Ascending aorta (tissue), 2 donors: ENCODE measurements at regions of chr6 and their contacts with region 1.

Region 1: GRCh38 chr6:148416330-148416965 is 73.8 kb downstream of the SASH1 start:
- DNase-seq: no peak
- H3K4me3 ChIP-seq: no peak overlapping the region
- H3K27ac ChIP-seq: no peak overlapping the region
- H3K4me1 ChIP-seq: peaks cover 5 to 24% of the 10 kb centered on the region in 2 donors
- H3K27me3 ChIP-seq: no peaks in the 10 kb centered on the region
- CTCF ChIP-seq: no peak

Region 2: DNA sequence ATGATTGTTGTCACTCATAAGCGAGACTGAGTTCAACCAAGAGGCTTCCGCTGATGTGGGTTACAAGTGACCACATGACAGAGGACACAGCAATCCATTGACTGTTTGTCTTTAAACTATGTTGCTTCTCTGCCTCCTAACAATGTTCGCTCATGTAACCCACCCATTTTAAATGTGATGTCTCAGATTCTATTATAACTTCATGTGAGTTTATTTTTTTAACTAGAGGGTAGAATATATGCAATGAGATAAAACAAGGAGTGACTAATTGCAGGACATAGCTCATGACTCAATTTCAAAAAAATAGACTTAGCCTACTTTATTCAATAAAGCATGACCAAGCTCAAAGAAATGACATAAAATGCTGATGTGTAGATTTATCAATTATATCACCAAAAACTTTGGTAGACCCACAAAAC is 193.0 kb before region 1 on chr6:
- intact Hi-C with region 1: no loop called
- DNase-seq: no peak
- H3K4me3 ChIP-seq: no peak overlapping the region
- H3K27ac ChIP-seq: no peak overlapping the region
- H3K4me1 ChIP-seq: peaks cover 0 to 4% of the 10 kb centered on the region in 2 donors
- H3K27me3 ChIP-seq: no peaks in the 10 kb centered on the region
- CTCF ChIP-seq: no peak

Region 3: GRCh38 chr6:148382861-148383260 is 33.6 kb before region 1 on chr6:
- intact Hi-C with region 1: no loop called
- DNase-seq: no peak
- H3K4me3 ChIP-seq: no peak overlapping the region
- H3K27ac ChIP-seq: no peak overlapping the region
- H3K4me1 ChIP-seq: peaks cover 0 to 16% of the 10 kb centered on the region in 2 donors
- H3K27me3 ChIP-seq: no peaks in the 10 kb centered on the region
- CTCF ChIP-seq: no peak

Region 4: DNA sequence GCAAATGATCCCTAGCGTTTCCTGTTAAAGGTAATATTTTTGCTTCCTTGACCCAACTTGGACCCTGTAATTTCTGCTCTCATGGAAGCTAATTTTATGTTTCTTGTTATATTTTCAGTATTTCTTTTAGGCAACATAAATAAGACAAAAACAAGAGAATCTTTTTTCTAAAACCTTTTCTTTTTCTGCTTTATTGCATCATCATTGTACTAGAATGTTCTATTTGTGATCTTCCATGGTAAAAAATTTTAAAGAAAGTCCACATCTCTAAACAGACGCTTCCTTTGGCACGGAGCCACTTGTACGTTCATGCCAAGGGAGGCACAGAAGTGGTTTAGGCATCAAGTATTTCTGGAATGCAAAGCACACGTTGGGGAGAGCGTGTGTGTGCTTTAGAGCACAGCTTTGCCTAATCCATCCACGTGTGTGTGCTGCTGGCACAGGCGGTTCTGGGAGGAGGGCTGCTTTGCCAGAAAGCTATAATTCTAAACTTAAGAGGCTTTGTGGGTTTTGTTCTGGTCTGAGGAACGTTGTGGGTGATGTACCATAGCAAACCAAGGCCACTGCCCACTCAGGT is 24.5 kb after region 1 on chr6:
- intact Hi-C with region 1: loop called (anchors 2 kb)
- DNase-seq: peak in 1 of 2 donors; percentile 85
- H3K4me3 ChIP-seq: peak overlapping the region in 1 of 2 donors; percentile 24
- H3K27ac ChIP-seq: peak overlapping the region; percentile 81 to 83
- H3K4me1 ChIP-seq: peaks cover 12 to 38% of the 10 kb centered on the region in 2 donors
- H3K27me3 ChIP-seq: no peaks in the 10 kb centered on the region
- CTCF ChIP-seq: no peak